ENCODE measurements at regions of chr11 and their contacts with region 1.

Region 1: DNA sequence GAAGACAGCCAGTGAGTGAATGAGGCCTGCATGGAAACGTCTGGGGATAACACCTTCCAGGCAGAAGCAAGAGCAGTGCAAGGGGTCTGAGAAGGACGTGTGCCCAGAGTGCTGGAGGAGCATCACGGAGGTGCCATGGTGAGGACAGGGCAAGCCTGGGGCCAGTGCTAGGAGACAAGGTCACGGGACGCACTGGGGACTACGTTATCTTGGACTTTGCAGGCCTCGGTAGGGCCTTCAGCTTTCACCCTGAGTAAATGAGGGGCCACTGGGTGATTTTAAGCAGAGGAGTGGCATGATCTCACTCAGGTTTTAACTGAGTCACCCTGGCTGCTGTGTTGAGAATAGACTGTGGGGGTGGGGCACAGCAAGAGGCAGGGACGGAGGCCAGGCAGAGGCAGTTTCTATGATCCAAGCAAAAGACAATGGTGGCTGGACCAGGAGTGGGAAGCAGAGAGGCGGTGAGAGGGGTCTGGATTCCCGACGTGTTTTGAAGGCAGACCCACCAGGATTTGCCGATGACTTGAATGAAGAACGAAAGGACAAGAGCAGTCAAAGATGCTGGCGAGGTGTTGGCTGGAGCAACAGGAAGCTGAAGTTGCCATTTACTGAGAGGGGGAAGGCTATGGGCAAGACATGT is 102.7 kb upstream of the PARVA start:
- DNase-seq: no peak
- H3K4me3 ChIP-seq: no peak overlapping the region
- H3K27ac ChIP-seq: no peak overlapping the region
- H3K4me1 ChIP-seq: no peaks in the 10 kb centered on the region
- H3K27me3 ChIP-seq: no peaks in the 10 kb centered on the region
- CTCF ChIP-seq: no peak

Region 2: DNA sequence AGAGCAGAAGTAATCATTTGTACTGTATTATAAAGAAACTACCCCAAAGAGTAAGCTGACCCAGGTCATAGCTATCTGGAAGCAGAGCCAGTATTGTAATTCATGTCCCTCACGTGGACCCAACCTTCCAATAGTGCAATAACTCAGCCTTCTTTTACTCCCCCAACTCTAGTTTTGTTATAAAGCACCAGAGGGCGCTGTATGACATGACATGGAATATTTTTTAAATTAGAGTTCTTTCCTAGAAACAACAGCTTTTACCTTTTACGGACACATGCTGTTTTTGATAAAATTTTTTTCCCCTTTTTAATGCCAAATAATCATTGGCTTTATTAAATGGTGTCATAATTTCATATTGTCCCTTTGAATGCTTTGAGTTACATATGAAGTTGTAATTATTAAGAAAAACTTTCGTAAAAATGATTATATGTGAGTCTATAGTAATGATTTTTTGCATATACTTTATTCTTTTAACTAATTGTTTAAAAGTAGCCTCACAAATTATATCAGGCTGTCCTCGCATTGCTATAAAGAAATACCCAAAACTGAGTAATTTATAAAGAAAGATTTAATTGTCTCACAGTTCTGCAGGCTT is 343.1 kb before region 1 on chr11:
- intact Hi-C with region 1: loop called (anchors 10 kb)
- DNase-seq: no peak
- H3K4me3 ChIP-seq: no peak overlapping the region
- H3K27ac ChIP-seq: no peak overlapping the region
- H3K4me1 ChIP-seq: no peaks in the 10 kb centered on the region
- H3K27me3 ChIP-seq: no peaks in the 10 kb centered on the region
- CTCF ChIP-seq: peak; percentile 58

Region 3: DNA sequence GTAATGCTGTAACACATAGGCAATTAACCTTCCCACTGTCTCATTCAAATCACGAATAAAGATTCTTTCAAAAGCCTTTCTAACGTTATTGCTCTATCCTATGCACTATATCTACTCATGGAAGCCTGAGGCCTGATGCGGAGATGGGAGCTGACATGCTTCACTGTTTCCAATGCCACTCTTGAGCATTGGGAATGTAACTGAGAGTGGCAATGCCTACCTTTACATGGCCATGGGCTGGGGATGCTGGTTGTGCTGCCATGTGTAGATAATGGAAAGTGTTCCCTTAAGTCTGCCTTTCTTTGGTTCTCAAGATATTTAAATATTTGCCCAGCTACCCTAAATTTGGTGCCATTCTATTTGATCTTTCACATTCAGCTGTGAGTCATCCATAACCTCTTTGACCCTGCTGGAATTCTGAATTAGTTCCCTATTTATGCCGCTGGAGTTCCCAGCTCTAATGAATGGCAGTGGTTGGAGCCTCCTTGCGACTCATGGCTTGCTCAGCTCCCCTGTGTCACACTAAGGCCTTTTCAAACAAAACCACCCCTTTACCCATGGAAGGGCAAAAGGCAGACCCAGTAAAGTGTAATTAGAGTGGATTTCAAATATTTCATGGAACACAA is 244.8 kb before region 1 on chr11:
- intact Hi-C with region 1: no loop called
- DNase-seq: no peak
- H3K4me3 ChIP-seq: no peak overlapping the region
- H3K27ac ChIP-seq: no peak overlapping the region
- H3K4me1 ChIP-seq: no peaks in the 10 kb centered on the region
- H3K27me3 ChIP-seq: no peaks in the 10 kb centered on the region
- CTCF ChIP-seq: no peak

Region 4: DNA sequence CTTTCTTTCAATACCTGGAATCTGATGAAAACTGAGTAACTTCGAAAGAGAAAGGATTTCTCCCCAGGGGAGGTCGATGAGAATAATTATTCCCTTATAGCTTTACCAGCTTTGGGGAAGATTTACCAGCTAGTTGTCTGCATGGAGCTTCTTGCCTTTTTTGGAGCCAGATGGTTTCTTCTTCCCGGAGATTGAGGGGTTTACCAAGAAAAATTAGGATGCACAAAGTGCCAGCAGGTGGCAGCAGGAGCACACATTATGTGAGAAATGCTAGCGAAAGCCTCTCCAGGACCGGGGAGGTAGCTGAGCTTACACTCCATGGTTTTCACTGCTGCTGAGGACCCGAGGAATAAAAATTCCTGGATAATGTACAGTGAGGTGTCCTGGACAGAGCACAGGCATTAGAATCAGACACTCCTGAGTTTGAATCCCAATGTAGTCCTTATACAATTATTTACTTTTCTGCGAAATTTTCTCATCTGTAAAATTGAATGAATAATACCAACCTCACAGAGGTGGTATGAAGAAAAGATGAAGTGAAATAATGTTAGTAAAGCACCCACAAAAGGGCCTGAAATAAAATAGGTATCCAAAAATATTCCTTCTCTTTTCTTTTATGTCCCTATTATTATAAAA is 56.7 kb after region 1 on chr11:
- intact Hi-C with region 1: no loop called
- DNase-seq: peak; percentile 91
- H3K4me3 ChIP-seq: no peak overlapping the region
- H3K27ac ChIP-seq: no peak overlapping the region
- H3K4me1 ChIP-seq: no peaks in the 10 kb centered on the region
- H3K27me3 ChIP-seq: no peaks in the 10 kb centered on the region
- CTCF ChIP-seq: peak; percentile 62

Region 5: GRCh38 chr11:12469451-12469850 is 194.8 kb after region 1 on chr11:
- intact Hi-C with region 1: no loop called
- DNase-seq: no peak
- H3K4me3 ChIP-seq: no peak overlapping the region
- H3K27ac ChIP-seq: no peak overlapping the region
- H3K4me1 ChIP-seq: no peaks in the 10 kb centered on the region
- H3K27me3 ChIP-seq: no peaks in the 10 kb centered on the region
- CTCF ChIP-seq: no peak